IMR-90 (cell line): ENCODE measurements at regions of chr9 and their contacts with region 1.

Region 1: DNA sequence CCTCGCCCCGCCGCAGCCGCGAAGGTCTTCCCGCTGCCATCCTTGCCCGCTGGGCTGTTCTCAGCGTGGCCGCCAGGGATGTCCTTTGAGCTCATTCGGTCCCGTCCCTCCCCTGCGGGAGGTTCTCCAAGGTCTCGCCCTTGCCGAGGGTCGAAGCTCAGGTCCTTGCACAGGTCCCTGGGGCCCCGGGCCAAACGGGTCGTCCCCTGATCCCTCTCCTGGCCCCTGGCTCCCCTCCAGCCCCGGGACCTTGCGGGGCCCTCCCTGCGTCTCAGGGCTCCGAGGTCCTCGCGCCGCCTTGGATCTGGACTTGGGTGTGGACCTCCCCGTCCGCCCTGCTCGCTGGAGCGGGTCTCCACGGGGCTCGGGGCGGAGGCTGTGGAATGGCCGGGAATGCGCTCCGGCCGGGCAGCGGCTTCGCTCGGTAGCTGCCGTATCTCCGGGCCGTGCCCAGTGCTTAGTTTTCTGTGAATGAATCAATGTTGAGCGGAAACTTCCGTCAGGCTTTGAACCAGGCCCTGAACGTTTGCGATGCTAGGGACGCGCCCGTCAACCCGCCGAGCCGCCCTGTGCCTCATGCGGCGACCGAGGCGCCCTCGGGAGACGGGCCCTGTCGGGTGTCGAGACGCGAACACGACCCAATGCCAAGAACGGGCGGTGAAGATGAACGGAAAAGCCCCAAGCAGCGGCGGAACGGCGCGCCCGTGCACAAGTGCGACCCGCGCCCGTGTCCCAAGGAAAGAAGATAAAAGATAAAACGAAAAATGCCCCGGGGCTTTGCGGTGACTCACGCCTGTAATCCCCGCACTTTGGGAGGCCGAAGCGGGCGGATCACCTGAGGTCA is 789 bp downstream of the RNU6ATAC start:
- DNase-seq: peak; percentile 22
- ATAC-seq: no peak
- H3K4me3 ChIP-seq: peak overlapping the region; percentile 24
- H3K27ac ChIP-seq: peak overlapping the region; percentile 67
- H3K4me1 ChIP-seq: peaks cover 5% of the 10 kb centered on the region
- H3K27me3 ChIP-seq: no peaks in the 10 kb centered on the region
- CTCF ChIP-seq: no peak
- POLR2A ChIP-seq: no peak
- RAD21 ChIP-seq: no peak

Region 2: DNA sequence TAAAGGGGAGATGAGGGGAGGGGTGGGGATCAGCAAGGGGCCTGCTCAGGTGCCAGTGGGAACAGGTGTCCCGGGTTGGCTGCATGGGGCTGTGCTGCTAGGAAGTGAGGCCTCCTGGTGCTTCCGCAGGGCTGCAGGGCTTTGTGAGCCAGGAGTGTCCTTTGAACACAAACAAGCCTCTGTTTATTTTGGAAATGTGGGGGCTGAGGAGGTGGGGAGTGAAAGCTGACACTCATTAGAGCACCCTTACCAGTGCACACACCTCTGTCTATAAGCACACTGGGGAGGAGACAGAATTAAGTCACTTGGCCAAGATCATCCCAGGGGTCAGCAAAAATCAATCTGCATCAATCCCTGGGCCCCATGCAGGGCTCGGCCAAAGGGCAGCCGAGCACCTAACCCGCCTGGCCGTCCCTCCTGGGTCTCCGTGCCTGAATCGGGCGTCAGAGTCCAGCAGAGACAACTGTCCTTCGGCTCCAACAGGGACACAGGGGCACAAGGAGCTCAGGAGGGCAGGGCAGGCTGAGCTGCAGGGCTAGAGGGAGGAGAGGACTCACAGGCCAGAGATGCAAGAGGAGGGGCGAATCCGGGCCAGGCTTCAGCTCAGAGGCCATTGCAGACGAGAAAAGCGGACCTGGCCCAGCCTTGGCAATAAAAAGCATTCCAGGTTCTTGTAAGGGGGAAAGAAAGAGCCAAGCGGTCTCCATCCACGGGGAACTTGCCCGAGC is 271.2 kb before region 1 on chr9:
- CTCF ChIA-PET with region 1: no interaction called
- POLR2A ChIA-PET with region 1: no interaction called
- dilution Hi-C with region 1: no loop called
- in situ Hi-C with region 1: no loop called
- intact Hi-C with region 1: no loop called
- DNase-seq: no peak
- ATAC-seq: peak; percentile 38; the same call in 1 of the 2 replicates
- H3K4me3 ChIP-seq: no peak overlapping the region
- H3K27ac ChIP-seq: no peak overlapping the region
- H3K4me1 ChIP-seq: peaks cover 17% of the 10 kb centered on the region; the same call in 1 of the 2 replicates
- H3K27me3 ChIP-seq: no peaks in the 10 kb centered on the region
- CTCF ChIP-seq: no peak
- POLR2A ChIP-seq: no peak
- RAD21 ChIP-seq: no peak

Region 3: GRCh38 chr9:134068744-134069479 is 94.7 kb before region 1 on chr9:
- CTCF ChIA-PET with region 1: no interaction called
- POLR2A ChIA-PET with region 1: no interaction called
- dilution Hi-C with region 1: no loop called
- in situ Hi-C with region 1: no loop called
- intact Hi-C with region 1: no loop called
- DNase-seq: peak; percentile 6
- ATAC-seq: no peak; the same call in 1 of the 2 replicates
- H3K4me3 ChIP-seq: peak overlapping the region; percentile 96
- H3K27ac ChIP-seq: peak overlapping the region; percentile 28; the same call in 1 of the 2 replicates
- H3K4me1 ChIP-seq: peaks cover 7% of the 10 kb centered on the region
- H3K27me3 ChIP-seq: peaks cover 33% of the 10 kb centered on the region
- CTCF ChIP-seq: no peak
- POLR2A ChIP-seq: no peak
- RAD21 ChIP-seq: no peak

Region 4: GRCh38 chr9:134443168-134444037 is 279.8 kb after region 1 on chr9:
- CTCF ChIA-PET with region 1: interaction called, 4 read pairs
- POLR2A ChIA-PET with region 1: no interaction called
- dilution Hi-C with region 1: no loop called
- in situ Hi-C with region 1: loop called (anchors 5 kb)
- intact Hi-C with region 1: no loop called
- DNase-seq: peak; percentile 93
- ATAC-seq: peak; percentile 93
- H3K4me3 ChIP-seq: no peak overlapping the region
- H3K27ac ChIP-seq: no peak overlapping the region
- H3K4me1 ChIP-seq: peaks cover 17% of the 10 kb centered on the region
- H3K27me3 ChIP-seq: no peaks in the 10 kb centered on the region
- CTCF ChIP-seq: peak; percentile 96
- POLR2A ChIP-seq: peak; percentile 50; the same call in 1 of the 2 replicates
- RAD21 ChIP-seq: peak; percentile 99

Region 5: GRCh38 chr9:134660407-134660806 is 496.8 kb after region 1 on chr9:
- CTCF ChIA-PET with region 1: no interaction called
- POLR2A ChIA-PET with region 1: no interaction called
- dilution Hi-C with region 1: no loop called
- in situ Hi-C with region 1: loop called (anchors 10 kb)
- intact Hi-C with region 1: no loop called
- DNase-seq: no peak
- ATAC-seq: no peak
- H3K4me3 ChIP-seq: no peak overlapping the region
- H3K27ac ChIP-seq: no peak overlapping the region; the same call in 1 of the 2 replicates
- H3K4me1 ChIP-seq: peaks cover 26% of the 10 kb centered on the region
- H3K27me3 ChIP-seq: no peaks in the 10 kb centered on the region
- CTCF ChIP-seq: peak; percentile 49
- POLR2A ChIP-seq: no peak
- RAD21 ChIP-seq: no peak

Region 6: GRCh38 chr9:134725605-134725940 is 562.0 kb after region 1 on chr9:
- CTCF ChIA-PET with region 1: no interaction called
- POLR2A ChIA-PET with region 1: no interaction called
- dilution Hi-C with region 1: no loop called
- in situ Hi-C with region 1: no loop called
- intact Hi-C with region 1: loop called (anchors 5 kb)
- DNase-seq: peak; percentile 74
- ATAC-seq: peak; percentile 59
- H3K4me3 ChIP-seq: no peak overlapping the region
- H3K27ac ChIP-seq: no peak overlapping the region
- H3K4me1 ChIP-seq: peaks cover 20% of the 10 kb centered on the region
- H3K27me3 ChIP-seq: no peaks in the 10 kb centered on the region
- CTCF ChIP-seq: no peak
- POLR2A ChIP-seq: no peak
- RAD21 ChIP-seq: no peak